PC-9 (cell line): ENCODE measurements at regions of chr19 and their contacts with region 1.

Region 1: GRCh38 chr19:2950286-2951124 is 5.7 kb upstream of the ZNF77 start:
- DNase-seq: peak; percentile 95 to 100
- H3K4me3 ChIP-seq: peak overlapping the region; percentile 56
- H3K27ac ChIP-seq: peak overlapping the region; percentile 59
- H3K4me1 ChIP-seq: peaks cover 21% of the 10 kb centered on the region
- H3K27me3 ChIP-seq: no peaks in the 10 kb centered on the region
- CTCF ChIP-seq: no peak

Region 2: DNA sequence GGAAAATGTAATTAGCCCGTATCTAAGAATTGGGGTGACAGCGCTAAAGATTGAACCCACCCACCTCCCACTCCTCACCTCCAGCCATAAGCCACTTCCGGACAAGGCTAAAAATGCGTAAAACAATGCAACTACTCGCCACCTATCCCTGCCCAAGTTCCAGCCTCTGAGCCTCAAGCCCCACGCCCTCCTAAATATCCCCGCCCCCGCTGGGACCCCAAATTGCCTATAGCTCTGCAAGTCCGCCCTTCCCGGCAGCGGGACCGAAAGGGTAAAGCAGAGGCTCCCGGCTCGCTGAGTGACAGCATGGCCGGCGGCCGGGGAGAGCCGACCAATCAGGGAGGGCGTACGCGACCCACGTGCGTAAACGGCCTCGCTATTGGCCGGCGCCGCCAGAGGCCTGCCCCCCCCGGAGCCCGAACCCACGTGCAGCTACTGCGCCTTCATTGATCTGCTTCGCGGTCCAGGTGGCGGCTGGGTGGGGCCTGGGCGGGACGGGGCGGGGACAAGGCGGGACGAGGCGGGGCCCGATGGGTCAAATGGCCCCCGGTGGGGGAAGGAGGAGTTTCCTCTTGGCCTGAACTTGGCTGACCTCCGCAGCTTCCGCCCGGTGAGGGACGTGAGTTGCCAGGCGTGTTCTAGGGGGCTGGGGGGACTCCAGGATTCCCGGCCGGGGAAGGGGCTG is 26.6 kb after region 1 on chr19 and contains the start of gene TLE6:
- CTCF ChIA-PET with region 1: interaction called, 21 read pairs
- POLR2A ChIA-PET with region 1: interaction called, 4 read pairs
- intact Hi-C with region 1: loop called (anchors 2 kb)
- DNase-seq: peak; percentile 85 to 95
- H3K4me3 ChIP-seq: peak within 1 kb of the TSS; percentile 60; the same call in 1 of the 2 replicates
- H3K27ac ChIP-seq: no peak within 1 kb of the TSS
- H3K4me1 ChIP-seq: 0 out of 2 replicates have a peak, but pooled peaks cover 4% of the 10 kb centered on the region
- H3K27me3 ChIP-seq: no peaks in the 10 kb centered on the region
- CTCF ChIP-seq: no peak
- total RNA-seq, gene TLE6: 0.90 and 1.1 TPM in 2 replicates

Region 3: DNA sequence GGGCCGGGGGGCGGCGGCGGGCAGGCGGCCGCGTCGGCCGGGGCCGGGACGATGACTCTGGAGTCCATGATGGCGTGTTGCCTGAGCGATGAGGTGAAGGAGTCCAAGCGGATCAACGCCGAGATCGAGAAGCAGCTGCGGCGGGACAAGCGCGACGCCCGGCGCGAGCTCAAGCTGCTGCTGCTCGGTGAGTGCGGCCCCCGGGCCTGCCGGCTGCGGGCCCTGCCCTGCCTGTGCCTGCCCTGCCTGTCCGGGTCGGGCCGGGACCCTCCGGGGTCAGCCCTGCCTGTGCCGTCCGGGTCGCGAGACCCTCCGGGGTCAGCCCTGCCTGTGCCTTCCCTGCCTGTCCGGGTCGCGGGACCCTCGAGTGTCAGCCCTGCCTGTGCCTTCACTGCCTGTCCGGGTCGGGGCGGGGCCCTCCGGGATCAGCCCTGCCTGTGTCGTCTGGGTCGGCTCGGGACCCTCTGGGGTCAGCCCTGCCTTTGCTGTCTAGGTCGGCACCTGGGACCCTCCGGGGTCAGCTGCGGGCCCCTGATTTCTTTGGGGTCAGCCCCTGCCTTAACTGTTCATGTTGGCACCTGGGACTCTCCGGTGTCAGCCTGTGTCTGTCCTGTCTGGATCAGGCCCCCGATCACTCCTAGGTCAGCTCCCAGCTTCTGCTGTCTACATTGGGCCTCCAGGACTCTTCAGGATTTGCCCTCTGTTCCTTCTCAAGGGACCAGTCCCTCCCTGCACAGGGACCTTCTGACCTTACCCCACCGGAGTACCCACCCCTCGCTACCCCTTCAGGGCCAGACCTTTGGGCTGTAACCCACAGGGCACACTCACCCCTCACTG is 144.3 kb after region 1 on chr19:
- CTCF ChIA-PET with region 1: interaction called, 4 read pairs
- POLR2A ChIA-PET with region 1: interaction called, 36 read pairs
- intact Hi-C with region 1: loop called (anchors 10 kb)
- DNase-seq: no peak
- H3K4me3 ChIP-seq: peak overlapping the region; percentile 75
- H3K27ac ChIP-seq: no peak overlapping the region
- H3K4me1 ChIP-seq: no peaks in the 10 kb centered on the region
- H3K27me3 ChIP-seq: no peaks in the 10 kb centered on the region
- CTCF ChIP-seq: no peak

Region 4: GRCh38 chr19:3163230-3163886 is 212.9 kb after region 1 on chr19:
- CTCF ChIA-PET with region 1: no interaction called
- POLR2A ChIA-PET with region 1: no interaction called
- intact Hi-C with region 1: loop called (anchors 1 kb)
- DNase-seq: peak in 1 of 2 experiments; percentile 24
- H3K4me3 ChIP-seq: no peak overlapping the region
- H3K27ac ChIP-seq: no peak overlapping the region
- H3K4me1 ChIP-seq: peaks cover 9% of the 10 kb centered on the region
- H3K27me3 ChIP-seq: no peaks in the 10 kb centered on the region
- CTCF ChIP-seq: peak; percentile 87

Region 5: GRCh38 chr19:3544742-3545668 is 594.5 kb after region 1 on chr19:
- CTCF ChIA-PET with region 1: no interaction called
- POLR2A ChIA-PET with region 1: interaction called, 14 read pairs
- intact Hi-C with region 1: no loop called
- DNase-seq: peak; percentile 48 to 68
- H3K4me3 ChIP-seq: no peak overlapping the region
- H3K27ac ChIP-seq: no peak overlapping the region
- H3K4me1 ChIP-seq: no peaks in the 10 kb centered on the region
- H3K27me3 ChIP-seq: no peaks in the 10 kb centered on the region
- CTCF ChIP-seq: peak; percentile 86